ENCODE measurements at regions of chr17 and their contacts with region 1.

Region 1: GRCh38 chr17:27805520-27806146 is 5.3 kb upstream of the NOS2 start:
- DNase-seq: peak; percentile 70
- ATAC-seq: peak; percentile 76
- H3K4me3 ChIP-seq: peak overlapping the region; percentile 20; the same call in 1 of the 2 replicates
- H3K27ac ChIP-seq: peak overlapping the region; percentile 98
- H3K4me1 ChIP-seq: peaks cover 48% of the 10 kb centered on the region
- H3K27me3 ChIP-seq: no peaks in the 10 kb centered on the region
- CTCF ChIP-seq: peak; percentile 83 to 91 (median 91)
- EP300 ChIP-seq: peak in 1 of 2 experiments; percentile 64; a peak in 1 of 4 replicates
- POLR2A ChIP-seq: 0 out of 2 replicates have a peak, but pooled peaks have one; percentile 37
- RAD21 ChIP-seq: peak; percentile 93

Region 2: DNA sequence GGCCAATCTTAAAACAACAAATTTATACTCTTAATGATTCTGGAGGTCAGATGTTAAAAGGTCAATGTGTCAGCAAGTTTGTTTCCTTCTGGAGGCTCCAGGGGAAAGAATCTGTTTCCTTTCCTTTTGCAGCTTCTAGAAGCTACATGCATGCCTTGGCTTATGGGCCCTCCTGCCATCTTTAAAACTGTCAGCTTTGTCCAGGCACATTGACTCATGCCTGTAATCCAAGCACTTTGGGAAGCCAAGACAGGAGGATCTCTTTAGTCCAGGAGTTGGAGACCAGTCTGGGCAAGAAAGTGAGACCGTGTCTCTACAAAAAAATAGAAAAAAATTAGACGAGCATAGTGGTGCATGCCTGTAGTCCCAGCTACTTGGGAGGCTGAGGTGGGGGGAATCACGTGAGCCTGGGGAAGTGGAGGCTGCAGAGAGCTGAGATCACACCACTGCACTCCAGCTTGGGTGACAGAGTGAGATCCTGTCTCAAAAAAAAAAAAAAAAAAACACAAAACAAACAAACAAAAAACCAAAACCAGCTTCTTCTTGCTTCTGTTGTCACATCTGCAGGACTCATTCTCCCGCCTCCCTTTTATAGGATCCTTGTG is 63.6 kb before region 1 on chr17:
- CTCF ChIA-PET with region 1: no interaction called
- POLR2A ChIA-PET with region 1: no interaction called
- RAD21 ChIA-PET with region 1: no interaction called
- SMC1A ChIA-PET with region 1: no interaction called
- in situ Hi-C with region 1: no loop called
- intact Hi-C with region 1: no loop called
- DNase-seq: no peak
- ATAC-seq: no peak
- H3K4me3 ChIP-seq: no peak overlapping the region
- H3K27ac ChIP-seq: no peak overlapping the region
- H3K4me1 ChIP-seq: peaks cover 5% of the 10 kb centered on the region
- H3K27me3 ChIP-seq: no peaks in the 10 kb centered on the region
- CTCF ChIP-seq: no peak
- EP300 ChIP-seq: no peak
- POLR2A ChIP-seq: no peak
- RAD21 ChIP-seq: no peak

Region 3: DNA sequence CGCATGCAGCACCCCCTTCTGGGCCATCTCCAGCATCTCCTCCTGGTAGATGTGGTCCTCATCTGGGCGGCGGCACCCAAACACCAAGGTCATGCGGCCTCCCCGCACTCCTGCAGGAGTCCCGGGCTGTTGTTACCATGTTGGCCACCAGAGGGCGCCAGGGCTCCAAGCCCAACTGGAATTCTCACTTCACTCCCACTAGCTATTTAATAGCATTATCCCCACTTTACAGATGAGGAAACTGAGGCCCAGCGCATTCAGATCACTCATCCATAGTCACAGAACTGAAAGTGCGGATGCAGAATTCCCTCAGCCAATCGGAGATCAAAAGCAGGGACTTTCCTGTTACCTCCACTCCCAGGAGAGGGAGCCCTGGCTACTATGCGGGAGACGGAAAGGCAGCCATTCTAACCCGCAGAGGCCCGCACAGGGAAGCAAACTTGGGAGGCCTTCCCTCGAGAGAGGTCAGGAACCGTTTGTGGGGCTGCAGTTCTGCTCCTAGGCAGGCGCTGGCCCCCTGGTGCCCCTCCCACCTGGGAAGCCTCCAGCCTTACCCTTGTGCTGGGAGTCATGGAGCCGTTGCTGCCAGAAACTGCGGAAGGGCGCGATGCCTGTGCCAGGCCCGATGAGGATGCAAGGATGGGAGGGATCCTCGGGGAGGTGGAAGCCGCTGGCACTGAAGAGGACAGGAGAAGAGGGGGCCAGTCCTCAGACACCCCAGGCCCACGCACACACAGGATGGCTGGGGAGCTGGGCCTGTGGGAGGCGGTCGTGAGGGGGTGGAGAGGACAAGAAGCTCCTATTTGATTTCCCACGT is 45.4 kb before region 1 on chr17:
- CTCF ChIA-PET with region 1: interaction called, 43 read pairs
- POLR2A ChIA-PET with region 1: no interaction called
- RAD21 ChIA-PET with region 1: interaction called, 22 read pairs
- SMC1A ChIA-PET with region 1: interaction called, 21 read pairs
- in situ Hi-C with region 1: no loop called
- intact Hi-C with region 1: no loop called
- DNase-seq: no peak
- ATAC-seq: peak; percentile 84
- H3K4me3 ChIP-seq: no peak overlapping the region
- H3K27ac ChIP-seq: no peak overlapping the region
- H3K4me1 ChIP-seq: no peaks in the 10 kb centered on the region
- H3K27me3 ChIP-seq: no peaks in the 10 kb centered on the region
- CTCF ChIP-seq: peak; percentile 76 to 91 (median 78)
- EP300 ChIP-seq: no peak
- POLR2A ChIP-seq: no peak
- RAD21 ChIP-seq: peak; percentile 62

Region 4: DNA sequence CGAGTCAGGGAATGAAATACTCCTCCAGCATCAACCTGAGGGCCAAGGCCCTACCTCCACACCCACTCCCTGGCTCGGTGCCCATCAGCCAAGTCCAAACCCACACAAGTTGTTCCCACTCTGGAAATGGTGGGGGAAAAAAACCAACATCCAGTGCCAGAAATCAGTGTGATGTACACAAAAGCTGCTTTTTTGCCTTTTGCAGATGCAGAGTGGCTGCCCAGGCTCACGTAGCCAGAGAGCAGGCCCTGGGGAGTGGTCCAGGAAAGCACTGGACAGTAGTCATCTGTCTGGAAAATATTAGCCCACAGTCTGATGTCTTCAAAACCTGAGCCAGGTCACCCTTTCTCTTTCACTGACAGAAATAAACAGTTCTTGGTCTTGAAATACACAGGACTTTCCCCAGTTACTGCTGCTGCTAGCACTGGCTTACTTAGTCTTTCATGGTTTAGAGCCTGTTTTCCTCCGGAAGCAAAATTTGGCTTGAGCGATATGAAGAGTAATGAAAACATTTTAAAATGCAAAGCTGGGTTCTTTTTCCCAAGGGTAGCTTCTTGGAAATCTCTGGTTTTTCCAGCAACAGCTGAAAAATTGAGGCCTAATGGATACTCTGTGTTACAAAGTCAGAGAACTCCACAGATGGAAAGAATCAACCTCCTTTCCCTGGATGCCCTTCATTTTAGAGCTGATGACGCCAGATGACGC is 12.9 kb after region 1 on chr17:
- CTCF ChIA-PET with region 1: interaction called, 8 read pairs
- POLR2A ChIA-PET with region 1: interaction called, 7 read pairs
- RAD21 ChIA-PET with region 1: interaction called, 13 read pairs
- SMC1A ChIA-PET with region 1: interaction called, 9 read pairs
- in situ Hi-C with region 1: no loop called
- intact Hi-C with region 1: no loop called
- DNase-seq: no peak
- ATAC-seq: 0 out of 3 replicates have a peak, but pooled peaks have one; percentile 24
- H3K4me3 ChIP-seq: no peak overlapping the region
- H3K27ac ChIP-seq: no peak overlapping the region
- H3K4me1 ChIP-seq: no peaks in the 10 kb centered on the region
- H3K27me3 ChIP-seq: no peaks in the 10 kb centered on the region
- CTCF ChIP-seq: no peak
- EP300 ChIP-seq: no peak
- POLR2A ChIP-seq: no peak
- RAD21 ChIP-seq: no peak

Region 5: DNA sequence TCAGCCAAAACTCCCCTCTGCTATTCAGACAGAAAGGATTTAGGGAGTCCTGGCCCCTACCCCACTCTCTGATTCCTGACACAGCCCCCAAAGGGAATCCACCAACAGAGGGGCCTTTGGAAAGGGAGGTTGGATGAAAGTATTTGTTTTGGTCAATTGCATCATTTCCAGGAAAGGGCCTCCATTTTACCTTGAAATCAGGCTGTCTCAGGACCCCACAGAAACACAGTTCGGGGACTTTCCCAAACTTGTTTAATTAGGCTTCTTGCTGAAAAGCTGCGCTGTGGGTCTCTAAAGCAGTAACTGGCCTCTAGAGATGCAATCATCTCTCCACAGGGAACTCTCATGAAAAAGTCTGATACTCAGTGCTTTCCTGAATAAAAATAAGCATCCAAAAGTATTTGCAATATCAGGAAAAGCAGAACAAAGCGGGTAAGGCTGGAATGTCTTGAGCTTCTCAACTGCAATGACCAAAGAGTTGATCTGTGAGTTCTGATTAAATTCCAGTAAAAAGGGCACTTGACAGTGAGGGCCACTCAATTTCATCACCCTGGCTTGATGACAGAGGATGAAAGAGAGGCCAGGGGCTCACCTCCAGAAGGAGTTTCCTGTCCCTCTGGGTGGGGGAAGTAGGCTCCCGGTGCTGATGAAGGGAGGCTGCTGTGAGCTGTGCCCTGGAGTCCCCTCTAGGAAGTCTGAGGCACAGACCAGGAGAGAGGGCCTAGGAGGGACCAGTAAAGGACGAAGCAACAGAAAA is 51.2 kb after region 1 on chr17:
- CTCF ChIA-PET with region 1: interaction called, 16 read pairs
- POLR2A ChIA-PET with region 1: interaction called, 5 read pairs
- RAD21 ChIA-PET with region 1: interaction called, 16 read pairs
- SMC1A ChIA-PET with region 1: interaction called, 30 read pairs
- in situ Hi-C with region 1: no loop called
- intact Hi-C with region 1: no loop called
- DNase-seq: no peak
- ATAC-seq: no peak
- H3K4me3 ChIP-seq: no peak overlapping the region
- H3K27ac ChIP-seq: no peak overlapping the region
- H3K4me1 ChIP-seq: no peaks in the 10 kb centered on the region
- H3K27me3 ChIP-seq: no peaks in the 10 kb centered on the region
- CTCF ChIP-seq: no peak
- EP300 ChIP-seq: no peak
- POLR2A ChIP-seq: no peak
- RAD21 ChIP-seq: no peak

Region 6: GRCh38 chr17:27879987-27880608 is 74.5 kb after region 1 on chr17:
- CTCF ChIA-PET with region 1: interaction called, 664 read pairs
- POLR2A ChIA-PET with region 1: interaction called, 40 read pairs
- RAD21 ChIA-PET with region 1: interaction called, 439 read pairs
- SMC1A ChIA-PET with region 1: interaction called, 457 read pairs
- in situ Hi-C with region 1: loop called (anchors 5 kb)
- intact Hi-C with region 1: loop called (anchors 1 kb)
- DNase-seq: peak; percentile 23
- ATAC-seq: peak; percentile 99
- H3K4me3 ChIP-seq: no peak overlapping the region
- H3K27ac ChIP-seq: no peak overlapping the region
- H3K4me1 ChIP-seq: no peaks in the 10 kb centered on the region
- H3K27me3 ChIP-seq: no peaks in the 10 kb centered on the region
- CTCF ChIP-seq: peak; percentile 92 to 98 (median 95)
- EP300 ChIP-seq: no peak
- POLR2A ChIP-seq: no peak
- RAD21 ChIP-seq: peak; percentile 97

Region 7: DNA sequence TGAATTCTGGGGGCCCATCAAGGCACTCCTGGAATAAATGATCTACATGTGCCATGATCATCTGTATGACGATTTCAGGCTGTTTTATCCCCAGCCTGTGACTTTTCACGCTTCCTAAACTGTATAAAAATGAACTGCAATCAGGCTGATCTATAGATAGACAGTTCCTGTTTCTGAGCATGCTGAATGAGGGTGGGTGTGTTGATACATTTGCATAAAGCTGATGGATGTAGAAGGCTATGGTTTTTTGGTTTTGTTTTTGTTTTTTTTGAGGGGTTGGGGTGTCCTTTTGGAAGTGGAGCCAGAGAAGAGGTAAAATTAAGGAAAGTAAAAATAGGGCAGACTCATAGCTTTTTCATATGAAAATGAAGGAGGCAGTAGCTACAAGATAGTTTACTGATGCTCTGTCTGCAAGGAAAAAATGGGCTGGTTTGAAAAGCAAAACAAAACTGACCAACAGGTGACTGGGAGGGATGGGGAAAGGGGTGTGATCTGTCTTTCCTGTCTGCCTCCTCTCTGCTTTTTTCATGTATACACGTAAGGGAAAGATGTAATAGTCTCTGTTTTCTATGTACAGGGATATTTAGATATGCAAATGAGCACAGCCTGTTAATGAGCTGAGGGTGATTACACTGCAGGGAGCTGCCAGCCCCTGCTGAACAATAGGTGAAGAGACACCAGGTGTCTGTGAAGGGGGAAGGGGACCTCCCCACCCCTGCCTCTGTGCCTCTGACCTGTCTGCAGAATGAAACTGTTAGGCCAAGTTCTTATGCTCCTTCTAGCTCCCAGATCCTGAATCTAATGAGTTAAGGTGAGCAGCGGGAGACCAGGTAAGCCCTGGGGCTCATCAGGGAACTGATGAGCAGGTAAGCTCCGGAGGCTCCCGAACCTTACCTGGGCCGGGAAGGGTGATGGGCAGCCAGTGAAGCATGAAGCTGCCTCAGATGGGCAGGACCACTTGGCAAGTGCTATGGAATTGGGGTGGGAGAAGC is 134.1 kb after region 1 on chr17:
- CTCF ChIA-PET with region 1: interaction called, 10 read pairs
- POLR2A ChIA-PET with region 1: no interaction called
- RAD21 ChIA-PET with region 1: interaction called, 8 read pairs
- SMC1A ChIA-PET with region 1: interaction called, 4 read pairs
- in situ Hi-C with region 1: no loop called
- intact Hi-C with region 1: loop called (anchors 5 kb)
- DNase-seq: no peak
- ATAC-seq: peak; percentile 93
- H3K4me3 ChIP-seq: no peak overlapping the region
- H3K27ac ChIP-seq: no peak overlapping the region
- H3K4me1 ChIP-seq: peaks cover 13% of the 10 kb centered on the region
- H3K27me3 ChIP-seq: no peaks in the 10 kb centered on the region
- CTCF ChIP-seq: no peak
- EP300 ChIP-seq: no peak; a peak in 1 of 4 replicates
- POLR2A ChIP-seq: no peak
- RAD21 ChIP-seq: no peak

Region 8: DNA sequence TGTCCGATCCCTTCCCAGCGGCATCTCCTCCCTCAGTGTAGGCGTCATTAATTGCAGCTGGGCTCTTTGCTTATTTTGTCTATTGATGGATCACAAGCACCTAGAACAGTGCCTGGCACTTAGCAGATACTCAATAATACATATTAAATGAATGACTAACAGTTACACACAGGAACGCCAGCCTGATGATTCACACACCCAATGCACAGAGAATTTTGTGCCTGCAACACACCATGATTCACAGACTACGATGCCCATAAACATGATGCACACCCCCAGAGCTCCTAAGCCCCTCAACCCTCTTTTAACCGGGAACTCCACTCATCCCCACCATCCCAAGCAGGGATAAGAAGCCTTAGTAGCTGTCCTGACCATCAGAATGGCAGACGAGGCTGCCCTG is 446.8 kb after region 1 on chr17:
- CTCF ChIA-PET with region 1: interaction called, 20 read pairs
- POLR2A ChIA-PET with region 1: interaction called, 3 read pairs
- RAD21 ChIA-PET with region 1: interaction called, 21 read pairs
- SMC1A ChIA-PET with region 1: interaction called, 18 read pairs
- in situ Hi-C with region 1: no loop called
- intact Hi-C with region 1: no loop called
- DNase-seq: no peak
- ATAC-seq: no peak
- H3K4me3 ChIP-seq: no peak overlapping the region
- H3K27ac ChIP-seq: no peak overlapping the region
- H3K4me1 ChIP-seq: no peaks in the 10 kb centered on the region
- H3K27me3 ChIP-seq: no peaks in the 10 kb centered on the region
- CTCF ChIP-seq: no peak
- EP300 ChIP-seq: no peak
- POLR2A ChIP-seq: no peak
- RAD21 ChIP-seq: no peak